ENCODE measurements at regions of chr6 and their contacts with region 1.

Region 1: GRCh38 chr6:63598049-63599036 is 26.1 kb downstream of the LOC128125822 start:
- DNase-seq: peak; percentile 53
- ATAC-seq: peak; percentile 100
- H3K4me3 Mint-ChIP-seq: peak overlapping the region; percentile 84
- H3K27ac Mint-ChIP-seq: peak overlapping the region; percentile 35
- H3K4me1 Mint-ChIP-seq: peaks cover 13% of the 10 kb centered on the region
- H3K27me3 Mint-ChIP-seq: no peaks in the 10 kb centered on the region
- CTCF ChIP-seq: peak; percentile 58

Region 2: GRCh38 chr6:63307581-63308246 is 290.6 kb before region 1 on chr6:
- CTCF ChIA-PET with region 1: no interaction called
- POLR2A ChIA-PET with region 1: no interaction called
- intact Hi-C with region 1: loop called (anchors 1 kb)
- DNase-seq: no peak
- ATAC-seq: no peak
- H3K4me3 Mint-ChIP-seq: no peak overlapping the region
- H3K27ac Mint-ChIP-seq: no peak overlapping the region
- H3K4me1 Mint-ChIP-seq: no peaks in the 10 kb centered on the region
- H3K27me3 Mint-ChIP-seq: no peaks in the 10 kb centered on the region
- CTCF ChIP-seq: no peak

Region 3: DNA sequence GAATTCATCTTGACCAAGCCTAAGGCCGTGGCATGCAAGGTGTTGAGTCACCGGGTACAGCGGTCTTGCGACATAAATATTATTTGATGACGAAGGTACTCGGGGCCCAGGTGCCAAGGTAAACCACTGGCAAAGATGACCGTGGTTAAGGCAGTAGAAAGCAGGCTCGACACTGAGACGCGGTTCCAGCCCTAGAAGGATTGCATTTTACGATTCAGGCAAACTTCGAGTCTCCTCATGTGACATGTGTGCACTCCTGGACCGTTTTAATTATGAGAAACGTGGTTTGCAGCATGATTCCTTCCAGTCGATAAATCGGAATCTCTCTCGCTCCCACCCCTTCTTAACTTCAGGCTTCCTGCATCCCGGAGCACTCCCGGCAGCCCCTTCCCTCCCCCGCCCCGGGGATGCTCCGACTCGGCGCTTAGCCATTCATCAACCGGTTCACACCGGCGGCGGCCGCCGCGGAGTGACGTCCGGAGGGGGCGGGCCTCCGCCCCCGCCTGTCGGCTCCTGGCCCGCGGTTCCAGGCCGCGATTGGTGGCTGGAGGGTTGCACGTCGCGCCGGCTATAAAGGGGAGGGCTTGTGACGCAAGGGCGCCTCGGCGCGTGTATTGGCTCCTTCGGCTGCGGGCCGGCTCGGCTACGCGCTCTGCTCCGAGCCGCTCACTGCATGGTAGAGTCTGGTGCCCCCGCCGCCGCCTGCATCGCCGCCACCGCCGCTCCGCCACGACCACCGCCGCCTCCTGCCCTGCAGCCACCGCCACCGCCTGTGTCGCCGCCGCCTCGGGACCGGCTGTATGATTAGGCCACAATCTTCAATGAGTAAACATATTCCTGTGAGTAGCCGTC is 26.2 kb before region 1 on chr6 and contains the starts of genes LOC128125822 and PTP4A1:
- CTCF ChIA-PET with region 1: interaction called, 11 read pairs
- POLR2A ChIA-PET with region 1: interaction called, 8 read pairs
- intact Hi-C with region 1: loop called (anchors 1 kb)
- DNase-seq: peak; percentile 94
- ATAC-seq: peak; percentile 85
- H3K4me3 Mint-ChIP-seq: peak within 1 kb of the TSS; percentile 92
- H3K27ac Mint-ChIP-seq: peak within 1 kb of the TSS; percentile 97
- H3K4me1 Mint-ChIP-seq: peaks cover 33% of the 10 kb centered on the region
- H3K27me3 Mint-ChIP-seq: no peaks in the 10 kb centered on the region
- CTCF ChIP-seq: no peak
- total RNA-seq, gene PTP4A1: 32.4 and 35.2 TPM in 2 replicates

Region 4: DNA sequence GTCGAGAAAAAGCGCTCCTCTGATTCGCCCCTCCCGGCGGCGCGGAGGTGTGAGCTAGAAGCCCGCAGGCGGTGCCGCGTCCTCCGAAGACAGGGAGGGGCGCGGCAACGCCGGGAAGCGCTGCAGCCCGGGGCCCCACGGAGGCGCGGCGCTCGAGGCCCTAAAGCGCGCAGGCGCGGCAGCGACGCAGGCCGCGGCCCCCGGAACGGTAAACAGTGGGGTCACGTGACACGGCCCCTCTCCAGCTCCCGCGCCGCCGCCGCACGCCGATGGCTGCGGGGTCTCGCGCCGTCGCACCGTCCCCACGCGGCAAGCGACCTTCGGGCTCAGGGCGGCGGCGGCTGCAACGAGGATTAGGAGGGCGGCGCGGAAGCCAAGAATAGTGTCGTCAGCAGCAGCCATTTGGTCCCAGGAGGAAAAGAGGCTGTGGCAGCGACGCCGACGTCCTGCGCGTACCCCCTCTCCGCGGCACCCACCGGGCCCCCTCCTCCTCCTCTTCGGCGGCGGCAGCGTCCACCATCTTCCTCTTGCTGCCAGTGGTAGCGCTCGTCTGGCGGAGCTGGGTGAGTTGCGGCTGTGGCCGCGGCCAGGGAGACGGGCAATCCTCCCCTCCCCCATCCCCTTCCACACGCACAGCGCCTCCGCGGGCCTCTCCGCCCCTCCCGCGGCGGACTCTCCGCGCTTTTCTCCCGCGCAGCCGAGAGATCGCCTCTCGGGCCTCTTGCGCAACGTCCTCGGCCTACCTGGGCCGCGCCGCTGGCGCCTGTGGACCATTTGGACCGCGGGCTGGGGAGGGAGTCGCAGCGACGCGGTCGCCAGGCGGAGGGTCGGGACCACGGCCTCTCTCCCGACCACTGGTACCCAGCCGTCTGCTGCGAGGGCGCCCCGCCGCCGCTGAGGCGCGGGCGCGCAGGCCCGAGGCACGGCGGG is 37.5 kb after region 1 on chr6 and contains the start of gene PHF3:
- CTCF ChIA-PET with region 1: interaction called, 12 read pairs
- POLR2A ChIA-PET with region 1: interaction called, 15 read pairs
- intact Hi-C with region 1: loop called (anchors 1 kb)
- DNase-seq: peak; percentile 89
- ATAC-seq: peak; percentile 88
- H3K4me3 Mint-ChIP-seq: peak within 1 kb of the TSS; percentile 95
- H3K27ac Mint-ChIP-seq: peak within 1 kb of the TSS; percentile 94
- H3K4me1 Mint-ChIP-seq: peaks cover 46% of the 10 kb centered on the region
- H3K27me3 Mint-ChIP-seq: no peaks in the 10 kb centered on the region
- CTCF ChIP-seq: no peak
- total RNA-seq, gene PHF3: 52.4 and 56.7 TPM in 2 replicates

Region 5: GRCh38 chr6:63685446-63686379 is 87.4 kb after region 1 on chr6:
- CTCF ChIA-PET with region 1: interaction called, 9 read pairs
- POLR2A ChIA-PET with region 1: no interaction called
- intact Hi-C with region 1: loop called (anchors 1 kb)
- DNase-seq: no peak
- ATAC-seq: peak; percentile 89
- H3K4me3 Mint-ChIP-seq: peak overlapping the region; percentile 13
- H3K27ac Mint-ChIP-seq: peak overlapping the region; percentile 77
- H3K4me1 Mint-ChIP-seq: peaks cover 45% of the 10 kb centered on the region
- H3K27me3 Mint-ChIP-seq: no peaks in the 10 kb centered on the region
- CTCF ChIP-seq: no peak